ENCODE measurements at regions of chr12 and their contacts with region 1.

Region 1: GRCh38 chr12:106136263-106136662 is 2.5 kb downstream of the NUAK1 start:
- DNase-seq: peak; percentile 92
- ATAC-seq: no peak
- H3K4me3 Mint-ChIP-seq: peak overlapping the region; percentile 92
- H3K27ac Mint-ChIP-seq: peak overlapping the region; percentile 76
- H3K4me1 Mint-ChIP-seq: peaks cover 74% of the 10 kb centered on the region
- H3K27me3 Mint-ChIP-seq: peaks cover 7% of the 10 kb centered on the region
- CTCF ChIP-seq: peak; percentile 79

Region 2: GRCh38 chr12:105420659-105421240 is 715.5 kb before region 1 on chr12:
- CTCF ChIA-PET with region 1: interaction called, 22 read pairs
- POLR2A ChIA-PET with region 1: no interaction called
- DNase-seq: peak; percentile 82
- ATAC-seq: peak; percentile 70
- H3K4me3 Mint-ChIP-seq: no peak overlapping the region
- H3K27ac Mint-ChIP-seq: no peak overlapping the region
- H3K4me1 Mint-ChIP-seq: no peaks in the 10 kb centered on the region
- H3K27me3 Mint-ChIP-seq: no peaks in the 10 kb centered on the region
- CTCF ChIP-seq: peak; percentile 85

Region 3: GRCh38 chr12:105705765-105706164 is 430.5 kb before region 1 on chr12:
- CTCF ChIA-PET with region 1: interaction called, 14 read pairs
- POLR2A ChIA-PET with region 1: no interaction called
- DNase-seq: peak; percentile 67
- ATAC-seq: peak; percentile 57; the same call in 1 of the 2 replicates
- H3K4me3 Mint-ChIP-seq: no peak overlapping the region
- H3K27ac Mint-ChIP-seq: no peak overlapping the region; the same call in 1 of the 2 replicates
- H3K4me1 Mint-ChIP-seq: peaks cover 35% of the 10 kb centered on the region
- H3K27me3 Mint-ChIP-seq: peaks cover 4% of the 10 kb centered on the region; the same call in 1 of the 2 replicates
- CTCF ChIP-seq: peak; percentile 68

Region 4: GRCh38 chr12:106108185-106108835 is 28.0 kb before region 1 on chr12:
- CTCF ChIA-PET with region 1: interaction called, 8 read pairs
- POLR2A ChIA-PET with region 1: interaction called, 16 read pairs
- DNase-seq: peak; percentile 43
- ATAC-seq: peak; percentile 85
- H3K4me3 Mint-ChIP-seq: peak overlapping the region; percentile 8; the same call in 1 of the 2 replicates
- H3K27ac Mint-ChIP-seq: peak overlapping the region; percentile 90
- H3K4me1 Mint-ChIP-seq: peaks cover 73% of the 10 kb centered on the region
- H3K27me3 Mint-ChIP-seq: no peaks in the 10 kb centered on the region; the same call in 1 of the 2 replicates
- CTCF ChIP-seq: no peak

Region 5: DNA sequence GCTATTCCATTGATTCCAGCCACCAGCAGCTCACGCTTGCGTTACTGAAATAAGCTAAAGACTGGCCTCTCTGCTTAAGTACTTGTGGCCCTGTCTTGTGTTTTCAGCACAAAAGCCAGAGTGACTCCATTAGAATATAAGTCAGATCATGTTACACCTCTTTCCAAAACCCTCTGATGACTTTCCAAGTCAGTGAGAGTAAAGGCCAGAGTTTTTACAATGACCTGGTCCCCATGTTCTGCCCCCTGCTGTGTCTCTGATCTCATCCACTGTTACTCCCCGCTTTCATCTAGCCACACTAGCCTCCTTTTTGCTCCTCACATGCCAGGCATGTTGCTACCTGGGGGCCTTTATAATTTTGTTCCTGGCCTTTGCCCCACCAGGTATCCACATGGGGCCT is 118.5 kb after region 1 on chr12:
- CTCF ChIA-PET with region 1: no interaction called
- POLR2A ChIA-PET with region 1: no interaction called
- DNase-seq: peak; percentile 36
- ATAC-seq: peak; percentile 89
- H3K4me3 Mint-ChIP-seq: no peak overlapping the region
- H3K27ac Mint-ChIP-seq: no peak overlapping the region
- H3K4me1 Mint-ChIP-seq: peaks cover 12% of the 10 kb centered on the region
- H3K27me3 Mint-ChIP-seq: no peaks in the 10 kb centered on the region
- CTCF ChIP-seq: no peak

Measured in WTC11 (cell line).